CD8-positive, alpha-beta T cell (primary cell): ENCODE measurements at regions of chr11 and their contacts with region 1.

Region 1: GRCh38 chr11:128172046-128172878 is 415.1 kb downstream of the ETS1 start:
- DNase-seq: peak; percentile 76 to 91 (median 86)
- ATAC-seq: peak; percentile 89
- H3K4me3 ChIP-seq: no peak overlapping the region
- H3K4me3 Mint-ChIP-seq: no peak overlapping the region
- H3K27ac ChIP-seq: no peak overlapping the region
- H3K27ac Mint-ChIP-seq: no peak overlapping the region
- H3K4me1 ChIP-seq: no peaks in the 10 kb centered on the region
- H3K4me1 Mint-ChIP-seq: peaks cover 3% of the 10 kb centered on the region
- H3K27me3 ChIP-seq: no peaks in the 10 kb centered on the region
- H3K27me3 Mint-ChIP-seq: no peaks in the 10 kb centered on the region
- CTCF ChIP-seq: peak; percentile 88

Region 2: DNA sequence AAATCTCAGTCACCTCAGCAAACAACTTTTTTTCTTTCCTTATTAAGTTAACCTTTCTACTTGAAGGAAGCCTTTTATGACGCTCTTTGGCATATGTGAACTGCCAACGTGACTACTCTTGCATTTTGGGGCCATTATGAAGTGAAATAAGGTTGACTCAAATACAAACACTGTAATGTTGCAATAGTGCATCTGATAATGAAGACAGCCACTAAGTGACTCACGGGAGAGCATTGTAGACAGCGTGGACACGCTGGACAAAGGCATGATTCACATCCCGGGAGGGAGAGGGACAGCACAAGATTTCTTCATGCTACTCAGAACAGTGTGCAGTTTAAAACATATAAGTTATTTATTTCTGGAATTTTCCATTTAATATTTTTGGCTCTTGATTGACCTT is 145.7 kb before region 1 on chr11:
- CTCF ChIA-PET with region 1: interaction called, 13 read pairs
- POLR2A ChIA-PET with region 1: no interaction called
- intact Hi-C with region 1: loop called (anchors 1 kb)
- DNase-seq: no peak
- ATAC-seq: no peak
- H3K4me3 ChIP-seq: no peak overlapping the region
- H3K4me3 Mint-ChIP-seq: no peak overlapping the region
- H3K27ac ChIP-seq: no peak overlapping the region
- H3K27ac Mint-ChIP-seq: no peak overlapping the region
- H3K4me1 ChIP-seq: no peaks in the 10 kb centered on the region
- H3K4me1 Mint-ChIP-seq: peaks cover 2% of the 10 kb centered on the region
- H3K27me3 ChIP-seq: no peaks in the 10 kb centered on the region
- H3K27me3 Mint-ChIP-seq: peaks cover 5% of the 10 kb centered on the region
- CTCF ChIP-seq: no peak

Region 3: GRCh38 chr11:128188346-128189004 is 16.2 kb after region 1 on chr11:
- CTCF ChIA-PET with region 1: interaction called, 15 read pairs
- POLR2A ChIA-PET with region 1: no interaction called
- intact Hi-C with region 1: no loop called
- DNase-seq: no peak
- ATAC-seq: no peak
- H3K4me3 ChIP-seq: no peak overlapping the region
- H3K4me3 Mint-ChIP-seq: no peak overlapping the region
- H3K27ac ChIP-seq: peak overlapping the region in 1 of 2 experiments; percentile 4
- H3K27ac Mint-ChIP-seq: no peak overlapping the region
- H3K4me1 ChIP-seq: peaks cover 21% of the 10 kb centered on the region
- H3K4me1 Mint-ChIP-seq: peaks cover 19% of the 10 kb centered on the region
- H3K27me3 ChIP-seq: no peaks in the 10 kb centered on the region
- H3K27me3 Mint-ChIP-seq: no peaks in the 10 kb centered on the region
- CTCF ChIP-seq: no peak

Region 4: GRCh38 chr11:128757235-128757711 is 585.0 kb after region 1 on chr11:
- CTCF ChIA-PET with region 1: interaction called, 14 read pairs
- POLR2A ChIA-PET with region 1: no interaction called
- intact Hi-C with region 1: loop called (anchors 1 kb)
- DNase-seq: peak; percentile 48 to 90 (median 71)
- ATAC-seq: peak; percentile 99
- H3K4me3 ChIP-seq: no peak overlapping the region
- H3K4me3 Mint-ChIP-seq: peak overlapping the region; percentile 35
- H3K27ac ChIP-seq: peak overlapping the region in 1 of 2 experiments; percentile 30
- H3K27ac Mint-ChIP-seq: peak overlapping the region; percentile 88
- H3K4me1 ChIP-seq: peaks cover 67% of the 10 kb centered on the region
- H3K4me1 Mint-ChIP-seq: peaks cover 89% of the 10 kb centered on the region
- H3K27me3 ChIP-seq: no peaks in the 10 kb centered on the region
- H3K27me3 Mint-ChIP-seq: no peaks in the 10 kb centered on the region
- CTCF ChIP-seq: peak; percentile 76

Region 5: DNA sequence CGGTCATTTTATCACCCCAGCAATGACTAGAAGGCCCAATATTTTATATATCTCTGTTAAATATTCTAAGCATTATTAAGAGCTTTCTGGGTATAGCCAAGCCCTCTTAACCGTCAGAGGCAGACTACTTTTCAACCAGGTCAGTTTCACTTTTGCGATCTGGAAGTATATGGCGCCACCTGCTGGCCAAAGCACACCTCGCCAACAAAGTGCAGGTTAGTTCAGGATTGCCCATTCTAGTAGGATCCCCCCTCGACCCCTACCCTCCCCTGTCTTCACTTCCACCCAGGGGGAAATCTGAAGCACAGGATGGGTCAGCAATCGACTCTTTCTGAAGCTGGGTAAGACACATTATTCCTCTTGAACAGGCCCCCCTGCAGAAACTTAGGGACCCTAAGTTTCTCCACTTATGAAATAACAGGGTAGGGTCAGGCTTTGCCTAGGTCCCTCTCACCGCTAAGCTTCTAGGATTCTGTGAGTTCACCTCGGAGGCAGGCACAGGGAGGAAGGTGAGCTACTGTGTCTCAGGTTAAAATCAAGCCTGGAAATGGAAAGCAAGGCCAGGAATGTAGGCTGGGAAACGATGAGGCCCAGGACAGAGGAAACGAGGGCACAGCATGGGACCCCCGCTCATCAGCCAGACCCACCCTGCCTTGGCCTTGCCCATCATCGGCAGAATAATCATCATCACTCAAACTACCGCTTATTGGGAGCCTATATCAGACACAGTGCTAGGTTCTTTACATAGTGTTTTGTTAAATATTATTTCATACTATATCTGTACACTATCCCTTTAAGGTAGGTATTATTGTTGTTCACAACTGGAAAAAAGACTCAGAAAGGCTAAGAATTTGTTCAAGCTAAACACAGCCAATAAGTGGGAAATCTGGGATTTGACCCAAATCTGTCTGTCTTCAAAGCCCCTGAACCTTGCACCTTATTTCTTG is 659.2 kb after region 1 on chr11:
- CTCF ChIA-PET with region 1: interaction called, 162 read pairs
- POLR2A ChIA-PET with region 1: no interaction called
- intact Hi-C with region 1: loop called (anchors 1 kb)
- DNase-seq: peak; percentile 75 to 93 (median 88)
- ATAC-seq: peak; percentile 81
- H3K4me3 ChIP-seq: peak overlapping the region; percentile 11 to 26
- H3K4me3 Mint-ChIP-seq: peak overlapping the region; percentile 55
- H3K27ac ChIP-seq: peak overlapping the region; percentile 31 to 84
- H3K27ac Mint-ChIP-seq: peak overlapping the region; percentile 80
- H3K4me1 ChIP-seq: peaks cover 9% of the 10 kb centered on the region
- H3K4me1 Mint-ChIP-seq: peaks cover 18% of the 10 kb centered on the region
- H3K27me3 ChIP-seq: no peaks in the 10 kb centered on the region
- H3K27me3 Mint-ChIP-seq: no peaks in the 10 kb centered on the region
- CTCF ChIP-seq: peak; percentile 87

Region 6: DNA sequence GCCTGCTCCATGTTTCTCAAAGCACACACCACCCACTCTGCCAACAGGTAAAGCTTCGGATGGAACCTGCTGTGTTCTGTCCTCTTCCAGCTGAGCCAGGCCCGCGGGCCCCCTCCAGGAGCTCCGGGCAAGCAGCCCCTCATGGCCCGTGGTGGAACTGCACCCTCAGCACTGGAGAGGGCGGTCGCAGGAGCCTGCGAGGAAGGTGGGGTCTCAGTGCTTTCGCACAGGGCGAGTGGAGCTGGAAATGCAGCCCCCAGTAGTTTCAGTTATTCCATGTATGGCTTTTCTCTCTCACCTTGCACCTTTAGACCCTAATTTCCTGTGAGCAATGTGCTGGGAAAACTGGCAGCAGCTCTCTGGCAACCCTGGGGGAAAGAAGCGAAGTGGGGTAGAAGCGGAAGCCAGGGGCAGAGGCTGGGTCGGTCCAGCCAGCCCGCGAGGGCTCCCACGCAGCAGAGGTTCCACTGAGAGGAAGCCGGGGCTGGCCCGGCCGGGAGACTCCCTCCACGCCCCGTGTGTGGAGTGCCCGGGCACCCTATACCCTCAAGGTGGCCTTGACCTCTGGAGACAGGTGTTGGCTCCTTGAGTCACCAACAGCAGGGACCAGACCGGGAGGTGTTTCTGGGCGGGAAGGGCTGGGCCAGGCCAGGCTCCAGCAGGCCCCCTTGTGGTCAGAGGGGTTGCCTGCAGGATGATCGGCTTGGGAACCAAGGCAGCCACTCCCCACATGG is 1523.5 kb after region 1 on chr11:
- CTCF ChIA-PET with region 1: no interaction called
- POLR2A ChIA-PET with region 1: no interaction called
- intact Hi-C with region 1: loop called in 1 of 2 experiments (anchors 5 kb)
- DNase-seq: peak; percentile 34 to 80 (median 70)
- ATAC-seq: peak; percentile 95
- H3K4me3 ChIP-seq: peak overlapping the region; percentile 62 to 76
- H3K4me3 Mint-ChIP-seq: peak overlapping the region; percentile 88
- H3K27ac ChIP-seq: peak overlapping the region in 1 of 2 experiments; percentile 1
- H3K27ac Mint-ChIP-seq: peak overlapping the region; percentile 77
- H3K4me1 ChIP-seq: peaks cover 5% of the 10 kb centered on the region
- H3K4me1 Mint-ChIP-seq: peaks cover 8% of the 10 kb centered on the region
- H3K27me3 ChIP-seq: no peaks in the 10 kb centered on the region
- H3K27me3 Mint-ChIP-seq: peaks cover 23% of the 10 kb centered on the region
- CTCF ChIP-seq: peak; percentile 38